OCI-LY7 (cell line): ENCODE measurements at regions of chr16 and their contacts with region 1.

Region 1: DNA sequence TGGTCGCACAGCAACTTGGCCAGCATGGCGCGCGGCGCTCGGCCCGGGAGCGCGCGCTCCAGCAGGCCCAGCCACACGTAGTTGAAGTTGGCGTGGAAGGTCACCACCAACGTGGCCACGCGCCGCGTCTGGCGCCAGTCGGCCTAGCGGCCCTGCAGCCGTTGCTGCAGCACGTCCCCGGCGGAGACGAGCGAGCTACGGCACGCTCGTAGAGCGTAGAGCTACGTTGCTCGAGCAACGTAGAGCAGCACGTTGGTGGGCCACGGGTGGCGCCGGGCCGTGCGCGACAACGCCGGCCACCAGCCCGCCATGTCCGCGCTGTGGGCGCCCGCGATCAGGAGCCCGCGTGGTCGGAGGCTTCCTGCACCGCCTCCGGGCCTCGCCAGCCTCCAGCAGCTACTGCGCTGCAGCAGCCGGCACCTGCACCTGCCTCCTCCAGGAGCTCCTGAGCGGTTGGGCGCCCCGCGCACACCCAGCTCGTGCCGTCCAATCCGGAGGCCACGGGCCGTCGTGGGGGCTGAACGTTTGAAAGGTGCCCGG is 13.4 kb upstream of the SULT1A1 start:
- DNase-seq: peak; percentile 94
- H3K4me3 ChIP-seq: peak overlapping the region; percentile 92
- H3K27ac ChIP-seq: peak overlapping the region; percentile 60
- H3K4me1 ChIP-seq: peaks cover 43% of the 10 kb centered on the region
- CTCF ChIP-seq: no peak

Region 2: GRCh38 chr16:28491970-28492474 is 131.2 kb before region 1 on chr16 and contains the start of gene CLN3:
- CTCF ChIA-PET with region 1: interaction called, 3 read pairs
- POLR2A ChIA-PET with region 1: interaction called, 3 read pairs
- intact Hi-C with region 1: loop called (anchors 1 kb)
- DNase-seq: peak; percentile 97
- H3K4me3 ChIP-seq: peak within 1 kb of the TSS; percentile 88
- H3K27ac ChIP-seq: peak within 1 kb of the TSS; percentile 74
- H3K4me1 ChIP-seq: peaks cover 35% of the 10 kb centered on the region
- CTCF ChIP-seq: no peak
- total RNA-seq, gene CLN3: 29.7 and 45.5 TPM in 2 replicates

Region 3: GRCh38 chr16:28513484-28514181 is 109.6 kb before region 1 on chr16:
- CTCF ChIA-PET with region 1: no interaction called
- POLR2A ChIA-PET with region 1: no interaction called
- intact Hi-C with region 1: no loop called
- DNase-seq: no peak
- H3K4me3 ChIP-seq: no peak overlapping the region
- H3K27ac ChIP-seq: no peak overlapping the region
- H3K4me1 ChIP-seq: peaks cover under 1% of the 10 kb centered on the region
- CTCF ChIP-seq: no peak

Region 4: GRCh38 chr16:28531777-28532744 is 91.2 kb before region 1 on chr16:
- CTCF ChIA-PET with region 1: no interaction called
- POLR2A ChIA-PET with region 1: no interaction called
- intact Hi-C with region 1: no loop called
- DNase-seq: no peak
- H3K4me3 ChIP-seq: no peak overlapping the region
- H3K27ac ChIP-seq: no peak overlapping the region
- H3K4me1 ChIP-seq: no peaks in the 10 kb centered on the region
- CTCF ChIP-seq: no peak